ENCODE measurements at regions of chr17 and their contacts with region 1.

Region 1: DNA sequence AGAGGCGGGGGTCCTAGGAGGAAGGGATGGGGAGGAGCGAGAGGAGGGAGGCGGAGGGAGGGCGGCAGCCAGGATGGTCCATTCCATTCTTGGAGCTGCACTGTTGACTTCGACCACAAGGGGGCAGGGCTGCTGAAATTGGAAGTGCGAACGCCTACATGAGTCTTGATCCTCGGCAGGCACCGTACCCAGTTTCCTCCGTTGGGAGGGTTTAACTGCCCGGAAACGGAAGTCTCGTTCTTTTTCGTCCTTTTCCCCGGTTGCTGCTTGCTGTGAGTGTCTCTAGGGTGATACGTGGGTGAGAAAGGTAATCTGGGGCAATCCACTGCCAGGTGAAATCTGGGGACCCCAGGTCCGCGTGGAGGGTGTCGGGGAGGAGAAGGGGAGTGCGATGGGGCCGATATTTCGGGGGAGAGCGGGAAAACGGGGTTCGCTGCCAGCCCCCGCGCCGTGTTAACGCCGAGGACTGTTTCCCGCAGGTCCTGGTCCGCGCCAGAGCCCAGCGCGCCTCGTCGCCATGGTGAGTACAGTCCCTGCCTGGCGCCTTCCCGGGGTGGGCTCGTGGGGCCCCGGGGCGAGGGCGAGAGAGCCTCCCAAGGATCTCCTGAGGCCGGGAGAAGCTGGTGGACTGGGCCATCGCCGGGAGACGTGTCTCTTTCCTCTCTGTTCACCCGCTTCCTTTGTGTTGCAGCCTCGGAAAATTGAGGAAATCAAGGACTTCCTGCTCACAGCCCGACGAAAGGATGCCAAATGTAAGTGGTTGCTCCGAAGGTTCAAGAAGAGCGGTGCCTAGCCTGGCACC is at the start of gene RPL38:
- DNase-seq: peak; percentile 96 to 99 (median 97)
- H3K4me3 ChIP-seq: peak within 1 kb of the TSS; percentile 14 to 100 (median 79)
- H3K27ac ChIP-seq: peak within 1 kb of the TSS; percentile 43 to 95 (median 88)
- H3K4me1 ChIP-seq: peaks cover 15 to 38% of the 10 kb centered on the region in 2 donors
- H3K27me3 ChIP-seq: no peaks in the 10 kb centered on the region
- CTCF ChIP-seq: peak; percentile 92 to 99 (median 97)
- POLR2A ChIP-seq: peak; percentile 79 to 84
- total RNA-seq, gene RPL38: 136 to 1,558 (median 716) TPM

Region 2: DNA sequence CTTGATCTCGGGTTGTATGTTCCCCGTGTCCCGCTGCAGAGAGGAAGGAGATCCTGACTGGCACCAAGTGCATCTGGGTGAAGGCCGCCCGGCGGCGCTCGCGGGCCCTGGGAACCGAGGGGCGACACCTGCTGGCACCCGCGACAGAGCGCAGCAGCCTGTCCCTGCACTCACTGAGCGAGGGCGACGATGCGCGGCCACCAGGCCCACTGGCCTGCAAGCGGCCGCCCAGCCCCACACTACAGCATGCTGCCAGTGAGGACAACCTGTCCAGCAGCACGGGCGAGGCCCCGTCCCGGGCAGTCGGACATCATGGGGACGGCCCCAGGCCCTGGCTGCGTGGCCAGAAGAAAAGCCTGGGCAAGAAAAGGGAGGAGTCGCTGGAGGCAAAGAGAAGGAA is 150.5 kb after region 1 on chr17:
- intact Hi-C with region 1: loop called in 1 of 2 experiments (anchors 5 kb)
- DNase-seq: peak in 5 of 7 donors; percentile 30 to 67 (median 43)
- H3K4me3 ChIP-seq: no peak overlapping the region
- H3K27ac ChIP-seq: no peak overlapping the region
- H3K4me1 ChIP-seq: no peaks in the 10 kb centered on the region
- H3K27me3 ChIP-seq: peaks cover 73% of the 10 kb centered on the region
- CTCF ChIP-seq: peak in 5 of 6 experiments; percentile 14 to 44 (median 36)
- POLR2A ChIP-seq: no peak

Measured in adrenal gland (tissue), 19 donors.